ENCODE measurements at regions of chr1 and their contacts with region 1.

Region 1: DNA sequence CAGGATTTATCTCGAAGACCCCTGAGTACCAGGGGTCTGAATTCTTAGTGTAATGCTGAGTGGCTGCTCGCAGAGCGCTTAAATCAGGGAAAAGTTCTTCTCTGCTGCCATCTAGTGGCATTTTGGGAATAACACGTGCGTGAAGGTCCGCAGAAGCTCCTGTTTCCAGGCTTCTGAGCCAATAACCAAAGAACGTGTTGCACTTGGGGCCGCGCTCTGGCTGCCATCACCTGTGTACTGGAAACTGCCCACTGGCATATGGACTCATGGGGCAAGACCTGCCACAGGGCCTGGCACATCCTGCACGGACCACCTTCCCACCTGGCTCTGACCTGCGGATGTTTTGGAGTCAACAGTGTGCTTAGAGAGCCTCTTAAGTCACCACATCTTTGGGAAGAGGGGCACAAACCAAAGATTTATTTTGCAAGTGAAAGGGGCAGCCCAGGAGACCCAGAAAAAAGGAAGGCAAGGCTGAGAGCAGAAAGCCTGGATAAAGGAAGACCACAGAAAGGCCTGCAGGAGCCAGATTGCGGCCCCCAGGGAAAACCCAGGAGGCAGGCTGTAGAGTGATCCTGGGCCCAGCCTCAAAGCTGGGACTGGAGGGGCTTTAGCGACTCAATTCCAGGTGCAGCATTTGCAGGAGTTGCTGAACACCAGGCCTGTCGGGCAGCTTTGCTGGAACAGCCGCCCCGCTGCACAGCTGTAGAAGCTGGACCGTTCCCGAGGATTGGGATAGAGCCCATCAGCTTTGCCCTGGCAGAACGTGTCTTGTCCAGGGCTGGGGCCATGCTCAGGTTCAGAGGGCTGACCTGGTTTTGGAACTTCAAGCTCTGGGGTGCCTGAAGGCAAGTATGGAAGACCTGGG is 13.0 kb downstream of the CHIT1 start:
- DNase-seq: no peak
- H3K4me3 ChIP-seq: no peak overlapping the region
- H3K27ac ChIP-seq: no peak overlapping the region
- H3K4me1 ChIP-seq: peaks cover 0 to 4% (median 2%) of the 10 kb centered on the region in 4 donors
- H3K27me3 ChIP-seq: peaks cover 0 to 11% (median 0%) of the 10 kb centered on the region in 3 donors
- CTCF ChIP-seq: peak; percentile 23 to 77 (median 62)
- EP300 ChIP-seq: no peak
- POLR2A ChIP-seq: no peak

Region 2: DNA sequence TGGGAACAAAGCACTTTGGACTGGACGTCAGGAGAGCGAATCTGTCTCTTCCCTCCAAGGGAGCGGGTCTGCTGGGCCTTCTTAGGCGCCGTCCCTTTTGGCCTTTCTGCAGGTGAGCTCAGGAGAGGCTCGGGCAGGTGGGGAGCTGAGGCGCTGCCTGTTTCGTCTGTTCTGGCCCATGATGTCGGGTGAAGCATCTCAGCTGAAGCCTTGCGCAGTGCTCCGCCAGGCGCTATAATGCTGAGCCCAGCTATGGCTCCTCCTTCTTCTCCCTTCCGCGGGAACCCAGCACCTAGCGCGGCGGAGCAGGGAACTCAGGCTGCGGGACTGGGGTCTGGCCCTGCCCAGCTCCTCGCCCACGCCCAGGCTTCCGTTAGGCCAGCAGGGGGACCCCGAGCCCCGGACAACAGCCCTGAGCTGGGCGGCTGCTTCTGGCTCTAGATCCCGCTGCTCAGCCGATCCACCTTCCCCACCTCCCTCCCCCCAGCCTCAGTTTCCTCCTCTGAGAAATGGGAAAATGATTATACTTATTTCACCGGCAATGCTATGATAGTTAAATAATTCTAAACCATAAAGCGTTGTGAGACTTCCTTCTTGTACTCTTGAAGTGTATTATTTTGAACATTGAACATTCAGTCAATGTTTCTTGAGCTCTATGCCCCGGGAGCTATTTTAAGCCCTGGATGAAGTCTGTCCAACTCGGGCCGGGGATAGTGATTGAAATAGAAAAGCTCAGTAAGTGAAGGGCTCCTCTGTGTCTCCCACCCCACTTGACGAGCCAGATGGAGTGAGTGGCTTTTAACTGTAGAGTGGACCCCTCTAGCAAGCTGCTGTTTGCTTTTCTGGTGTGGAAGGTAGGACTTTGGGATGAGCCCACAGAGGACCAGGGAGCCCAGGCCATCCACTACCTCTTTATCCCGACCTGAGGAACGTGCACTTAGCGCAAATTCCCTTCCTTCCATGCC is 98.6 kb before region 1 on chr1:
- intact Hi-C with region 1: loop called (anchors 2 kb)
- DNase-seq: peak; percentile 80
- H3K4me3 ChIP-seq: no peak overlapping the region
- H3K27ac ChIP-seq: no peak overlapping the region
- H3K4me1 ChIP-seq: peaks cover 0 to 7% (median 4%) of the 10 kb centered on the region in 4 donors
- H3K27me3 ChIP-seq: peaks cover 0 to 47% (median 21%) of the 10 kb centered on the region in 3 donors
- CTCF ChIP-seq: peak in 3 of 4 experiments; percentile 50 to 77 (median 56)
- EP300 ChIP-seq: no peak
- POLR2A ChIP-seq: no peak

Measured in sigmoid colon (tissue), 7 donors.